PC-9 (cell line): ENCODE measurements at regions of chr7 and their contacts with region 1.

Region 1: GRCh38 chr7:98841179-98841997 is 28.4 kb downstream of the TMEM130 start:
- DNase-seq: peak; percentile 72 to 76
- H3K4me3 ChIP-seq: no peak overlapping the region
- H3K27ac ChIP-seq: no peak overlapping the region
- H3K4me1 ChIP-seq: no peaks in the 10 kb centered on the region
- H3K27me3 ChIP-seq: no peaks in the 10 kb centered on the region
- CTCF ChIP-seq: peak; percentile 98

Region 2: DNA sequence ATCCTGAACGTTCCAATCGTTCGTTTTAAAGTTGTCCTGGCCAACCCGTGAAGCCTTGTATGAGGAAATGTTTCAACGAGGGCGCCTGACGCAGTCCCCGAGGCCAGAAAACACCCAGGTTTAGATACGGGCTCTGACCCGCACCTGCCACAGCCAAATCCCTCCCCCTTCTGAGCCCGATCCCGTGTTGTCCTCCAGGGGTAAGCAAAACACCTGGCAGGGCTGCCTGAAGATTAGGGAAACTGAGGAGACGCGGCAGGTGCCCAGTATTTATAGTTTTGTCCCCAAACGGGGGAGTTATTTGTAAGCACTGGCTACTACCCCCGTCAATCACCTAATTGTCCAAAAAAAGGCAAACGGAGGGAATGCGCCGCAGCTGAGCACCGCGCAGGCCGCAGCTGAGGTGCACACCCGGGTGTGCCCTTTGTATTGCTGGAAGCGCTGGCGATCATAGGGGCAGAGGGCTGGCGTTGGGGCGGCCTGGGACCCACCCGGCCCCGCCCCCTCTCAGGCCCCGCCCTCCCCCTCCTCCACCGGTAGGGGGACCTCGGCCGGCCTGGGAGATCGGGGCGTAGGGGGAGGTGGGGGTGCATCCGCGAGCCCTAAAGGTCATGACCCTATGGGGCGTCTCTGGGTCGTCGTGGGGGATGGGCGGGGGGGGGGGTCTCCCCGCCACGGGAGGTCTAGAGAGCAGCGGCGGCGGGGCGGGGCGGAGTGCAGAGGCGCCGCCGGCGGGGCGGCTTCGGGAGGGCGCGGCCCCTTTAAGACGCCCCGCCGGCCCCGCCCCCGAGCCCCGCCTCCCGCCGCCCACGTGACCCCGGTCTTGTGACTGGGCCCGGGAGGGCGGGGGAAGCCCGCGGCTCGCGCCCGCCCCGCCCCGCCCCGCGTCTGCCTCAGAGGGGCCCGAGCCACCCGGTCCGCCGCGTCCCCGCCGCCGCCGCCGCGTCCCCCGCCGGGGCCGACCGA is 560.3 kb before region 1 on chr7 and contains the start of gene BRI3:
- CTCF ChIA-PET with region 1: no interaction called
- POLR2A ChIA-PET with region 1: no interaction called
- intact Hi-C with region 1: loop called (anchors 10 kb)
- DNase-seq: peak; percentile 70 to 88
- H3K4me3 ChIP-seq: peak within 1 kb of the TSS; percentile 87
- H3K27ac ChIP-seq: peak within 1 kb of the TSS; percentile 97
- H3K4me1 ChIP-seq: peaks cover 37% of the 10 kb centered on the region
- H3K27me3 ChIP-seq: no peaks in the 10 kb centered on the region
- CTCF ChIP-seq: no peak
- total RNA-seq, gene BRI3: 239 and 255 TPM in 2 replicates

Region 3: DNA sequence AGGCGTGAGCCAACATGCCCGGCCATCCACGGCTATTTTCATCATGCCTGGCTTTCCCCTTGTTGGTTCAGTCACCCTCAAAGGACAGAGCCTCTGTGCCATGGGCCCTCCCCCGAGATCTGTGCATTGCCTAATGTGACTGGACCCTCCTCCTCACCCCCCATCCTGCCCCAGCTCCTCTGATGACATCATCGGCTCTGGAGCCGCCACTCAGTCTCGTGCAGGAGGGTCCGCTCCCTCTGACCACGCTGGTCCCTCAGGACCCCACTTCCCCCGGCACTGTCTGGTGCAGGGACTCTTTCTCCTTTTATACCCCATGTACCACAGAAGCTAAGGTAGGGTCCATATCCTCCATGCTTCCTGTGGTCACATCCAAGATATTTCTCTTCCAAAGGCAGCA is 407.3 kb before region 1 on chr7:
- CTCF ChIA-PET with region 1: interaction called, 4 read pairs
- POLR2A ChIA-PET with region 1: no interaction called
- intact Hi-C with region 1: loop called (anchors 1 kb)
- DNase-seq: no peak
- H3K4me3 ChIP-seq: no peak overlapping the region
- H3K27ac ChIP-seq: no peak overlapping the region
- H3K4me1 ChIP-seq: no peaks in the 10 kb centered on the region
- H3K27me3 ChIP-seq: no peaks in the 10 kb centered on the region
- CTCF ChIP-seq: no peak

Region 4: DNA sequence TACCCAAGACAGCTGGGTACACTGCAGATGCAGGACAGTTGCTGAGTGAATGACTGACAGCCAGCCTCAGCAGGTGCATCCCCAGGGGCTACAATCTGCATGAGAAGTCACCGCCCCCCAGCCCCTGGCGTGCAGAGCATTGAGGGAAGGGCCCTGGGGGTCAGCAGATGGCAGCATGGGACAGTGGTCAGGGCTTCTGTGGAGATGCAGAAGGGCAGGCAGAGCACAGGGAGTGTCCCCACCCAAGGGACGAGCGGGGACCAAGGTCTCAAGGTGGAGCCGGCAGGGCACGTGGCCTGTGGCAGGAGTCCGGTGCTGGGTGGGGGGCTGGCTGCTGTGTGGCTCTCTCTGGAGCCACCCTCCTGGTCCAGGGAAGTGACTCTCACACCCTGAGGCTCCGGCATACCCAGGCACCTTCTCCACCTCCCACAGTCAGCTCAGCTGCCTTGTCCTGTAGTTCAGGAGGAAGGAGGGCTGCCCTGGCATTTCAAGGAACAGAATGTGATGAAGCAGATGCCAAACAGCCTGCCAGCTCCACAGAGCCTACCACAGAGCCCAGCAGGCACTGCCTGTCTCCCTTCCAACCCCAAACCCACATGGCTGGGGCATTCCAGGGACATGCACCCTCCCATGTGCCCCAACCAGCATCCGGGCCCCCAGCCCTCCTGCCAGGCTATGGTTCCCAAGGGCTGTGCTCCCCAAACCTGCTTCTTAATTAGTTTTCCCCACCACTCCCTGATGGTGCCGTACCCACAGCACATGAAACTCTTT is 86.1 kb before region 1 on chr7:
- CTCF ChIA-PET with region 1: no interaction called
- POLR2A ChIA-PET with region 1: no interaction called
- intact Hi-C with region 1: loop called (anchors 1 kb)
- DNase-seq: peak; percentile 20 to 23
- H3K4me3 ChIP-seq: no peak overlapping the region
- H3K27ac ChIP-seq: no peak overlapping the region
- H3K4me1 ChIP-seq: no peaks in the 10 kb centered on the region
- H3K27me3 ChIP-seq: peaks cover 34% of the 10 kb centered on the region; the same call in 1 of the 2 replicates
- CTCF ChIP-seq: no peak

Region 5: GRCh38 chr7:98990356-98990755 is 149.0 kb after region 1 on chr7:
- CTCF ChIA-PET with region 1: no interaction called
- POLR2A ChIA-PET with region 1: interaction called, 13 read pairs
- intact Hi-C with region 1: no loop called
- DNase-seq: no peak
- H3K4me3 ChIP-seq: no peak overlapping the region
- H3K27ac ChIP-seq: no peak overlapping the region
- H3K4me1 ChIP-seq: no peaks in the 10 kb centered on the region
- H3K27me3 ChIP-seq: no peaks in the 10 kb centered on the region
- CTCF ChIP-seq: no peak

Region 6: DNA sequence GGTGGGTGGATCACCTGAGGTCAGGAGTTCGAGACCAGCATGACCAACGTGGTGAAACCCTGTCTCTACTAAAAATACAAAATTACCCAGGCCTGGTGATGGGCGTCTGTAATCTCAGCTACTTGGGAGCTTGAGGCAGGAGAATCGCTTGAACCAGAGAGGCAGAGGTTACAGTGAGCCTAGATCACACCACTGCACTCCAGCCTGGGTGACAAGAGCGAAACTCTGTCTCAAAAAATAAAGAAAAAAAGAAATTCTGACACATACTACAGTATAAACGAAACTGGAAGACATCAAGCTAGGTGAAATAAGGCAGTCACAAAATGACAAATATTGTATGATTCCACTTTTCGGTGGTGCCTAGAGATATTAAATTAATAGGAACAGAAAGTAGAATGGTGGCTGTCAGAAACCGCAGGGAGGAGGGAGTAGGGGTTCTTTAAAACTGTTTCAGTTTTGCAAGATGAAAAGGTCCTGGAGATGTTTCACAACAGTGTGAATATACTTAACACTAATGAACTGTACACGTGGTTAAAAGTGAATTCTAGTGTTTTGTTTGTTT is 1555.1 kb after region 1 on chr7:
- CTCF ChIA-PET with region 1: no interaction called
- POLR2A ChIA-PET with region 1: no interaction called
- intact Hi-C with region 1: no loop called
- DNase-seq: no peak
- H3K4me3 ChIP-seq: no peak overlapping the region
- H3K27ac ChIP-seq: no peak overlapping the region
- H3K4me1 ChIP-seq: no peaks in the 10 kb centered on the region
- H3K27me3 ChIP-seq: no peaks in the 10 kb centered on the region
- CTCF ChIP-seq: no peak